Activated naive CD4-positive, alpha-beta T cell treated with anti-CD3 and anti-CD28 coated beads for 36 hours (primary cell): ENCODE measurements at regions of chr3 and their contacts with region 1.

Region 1: GRCh38 chr3:112074721-112075497 is 11.3 kb upstream of the C3orf52 start:
- DNase-seq: peak; percentile 79
- H3K4me3 Mint-ChIP-seq: peak overlapping the region; percentile 32
- H3K27ac Mint-ChIP-seq: peak overlapping the region; percentile 76
- H3K4me1 Mint-ChIP-seq: peaks cover 39% of the 10 kb centered on the region
- H3K27me3 Mint-ChIP-seq: no peaks in the 10 kb centered on the region

Region 2: DNA sequence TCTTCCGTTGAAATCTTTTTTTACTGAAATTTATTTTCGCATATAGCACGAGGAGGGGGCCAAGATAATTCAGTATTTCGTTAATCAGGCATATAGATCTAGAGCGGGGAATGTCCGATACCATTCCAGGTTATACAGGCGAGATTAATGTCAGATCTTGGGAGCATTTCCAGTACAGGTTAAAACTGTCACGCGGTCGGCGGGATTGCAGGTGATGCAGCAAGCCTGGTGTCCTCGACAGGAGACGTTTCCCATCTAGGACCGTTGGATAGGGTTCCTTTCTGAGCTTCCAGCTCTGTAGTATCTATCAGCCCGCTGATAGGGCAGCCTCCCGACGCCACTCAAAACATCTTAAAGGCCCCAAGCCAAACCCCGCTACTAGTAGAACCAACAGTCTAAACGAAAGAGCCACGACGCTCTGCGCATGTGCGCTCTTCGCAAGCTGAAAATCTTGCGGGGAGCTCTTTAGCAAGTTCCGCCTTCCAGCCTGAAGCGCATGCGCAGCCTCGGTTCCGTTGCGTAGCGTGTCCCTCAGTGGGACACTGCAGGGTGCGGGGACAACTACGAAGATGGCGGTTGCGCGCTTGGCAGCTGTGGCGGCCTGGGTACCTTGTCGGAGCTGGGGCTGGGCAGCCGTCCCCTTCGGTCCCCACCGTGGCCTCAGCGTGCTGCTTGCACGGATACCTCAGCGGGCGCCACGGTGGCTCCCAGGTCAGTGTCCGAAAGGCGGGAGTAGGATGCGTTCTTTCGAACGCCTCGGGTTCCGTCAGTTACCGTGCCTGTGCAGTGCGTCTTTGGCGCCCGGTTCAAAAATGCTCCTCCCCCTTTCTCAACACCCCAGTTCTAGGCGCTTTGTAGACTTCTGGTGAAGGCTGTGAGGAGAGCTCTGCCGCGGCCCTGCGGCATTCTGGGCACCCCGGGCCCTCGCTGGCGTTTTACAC is 96.1 kb before region 1 on chr3 and contains the start of gene ABHD10:
- CTCF ChIA-PET with region 1: no interaction called
- intact Hi-C with region 1: loop called (anchors 1 kb)
- DNase-seq: peak; percentile 98
- H3K4me3 Mint-ChIP-seq: peak within 1 kb of the TSS; percentile 87
- H3K27ac Mint-ChIP-seq: peak within 1 kb of the TSS; percentile 89
- H3K4me1 Mint-ChIP-seq: peaks cover 38% of the 10 kb centered on the region
- H3K27me3 Mint-ChIP-seq: no peaks in the 10 kb centered on the region
- total RNA-seq, gene ABHD10: 53.1 to 54.6 TPM

Region 3: DNA sequence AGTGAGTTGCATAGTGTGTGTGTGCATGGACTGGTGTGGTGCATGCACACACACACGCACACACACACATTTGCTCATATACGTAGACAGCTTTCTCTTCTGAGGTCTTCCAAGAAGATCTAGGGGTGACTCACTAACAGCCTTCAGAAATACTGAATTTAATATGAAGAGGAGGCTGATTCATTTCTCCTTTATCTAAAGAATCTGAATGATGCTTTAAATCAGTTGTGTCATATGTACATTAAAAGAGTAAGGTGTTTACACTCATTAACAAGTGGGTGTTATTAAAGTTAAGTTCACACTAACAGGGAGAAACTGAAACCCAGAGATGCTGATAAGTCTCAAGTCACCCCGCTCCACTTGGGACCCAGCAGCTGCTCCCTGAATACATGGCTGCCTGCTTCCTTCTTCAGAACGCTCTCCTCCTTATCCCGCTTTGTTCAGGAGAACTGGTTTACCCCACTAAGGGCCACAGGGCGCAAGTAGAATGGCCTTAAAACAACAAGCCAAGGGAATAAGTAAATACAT is 18.4 kb before region 1 on chr3:
- CTCF ChIA-PET with region 1: no interaction called
- intact Hi-C with region 1: loop called (anchors 1 kb)
- DNase-seq: peak; percentile 42
- H3K4me3 Mint-ChIP-seq: no peak overlapping the region
- H3K27ac Mint-ChIP-seq: peak overlapping the region; percentile 26
- H3K4me1 Mint-ChIP-seq: peaks cover 12% of the 10 kb centered on the region
- H3K27me3 Mint-ChIP-seq: peaks cover 2% of the 10 kb centered on the region

Region 4: GRCh38 chr3:112128843-112129727 is 54.2 kb after region 1 on chr3:
- CTCF ChIA-PET with region 1: no interaction called
- intact Hi-C with region 1: loop called (anchors 1 kb)
- DNase-seq: peak; percentile 82
- H3K4me3 Mint-ChIP-seq: peak overlapping the region; percentile 4
- H3K27ac Mint-ChIP-seq: peak overlapping the region; percentile 76
- H3K4me1 Mint-ChIP-seq: peaks cover 74% of the 10 kb centered on the region
- H3K27me3 Mint-ChIP-seq: no peaks in the 10 kb centered on the region